ENCODE measurements at regions of chr2 and their contacts with region 1.

Region 1: DNA sequence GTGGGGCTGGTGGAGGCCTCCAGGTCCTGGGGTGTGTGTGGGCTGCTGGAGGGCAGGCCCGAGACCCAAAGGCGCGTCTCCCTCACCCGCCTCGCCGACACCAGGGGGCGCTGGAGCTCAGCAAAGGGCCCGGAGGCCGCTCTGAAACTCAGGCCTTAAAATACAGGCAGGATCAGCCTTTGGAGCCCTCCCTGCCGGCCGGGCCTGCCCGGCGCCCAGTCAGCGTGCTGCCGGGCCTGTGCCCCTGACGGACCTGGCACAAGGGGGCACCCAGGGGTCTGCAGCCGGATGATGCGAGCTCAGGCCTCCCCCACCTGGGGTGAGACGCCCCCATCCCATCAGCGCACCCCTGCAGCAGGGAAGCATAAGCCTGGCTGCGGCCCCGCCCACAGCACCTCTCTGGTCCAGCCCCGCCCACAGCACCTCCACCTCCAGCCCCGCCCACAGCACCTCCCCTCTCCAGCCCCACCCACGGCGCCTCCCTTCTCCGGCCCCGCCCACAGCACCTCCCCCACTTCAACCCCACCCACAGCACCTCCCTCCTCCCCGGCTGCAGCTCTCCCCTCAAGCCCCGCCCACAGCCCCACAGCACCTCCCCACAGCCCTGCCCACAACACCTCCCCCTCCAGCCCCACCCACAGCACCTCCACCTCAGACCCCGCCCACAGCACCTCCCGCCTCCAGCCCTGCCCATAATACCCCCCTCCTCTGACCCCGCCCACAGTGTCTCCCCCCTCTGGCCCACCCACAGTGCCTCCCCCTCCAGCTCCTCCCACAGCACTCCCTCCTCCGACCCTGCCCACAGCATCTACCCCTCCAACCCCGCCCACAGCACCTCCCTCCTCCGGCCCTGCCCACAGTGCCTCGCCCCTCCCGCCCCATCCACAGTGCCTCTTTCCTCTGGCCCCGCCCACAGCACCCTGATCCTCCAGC is 92.8 kb upstream of the OTOS start:
- DNase-seq: peak; percentile 86 to 94 (median 92)
- ATAC-seq: peak; percentile 77 to 83 (median 78)
- H3K4me3 ChIP-seq: peak overlapping the region in 9 of 12 donors; percentile 24 to 46 (median 35)
- H3K27ac ChIP-seq: peak overlapping the region in 9 of 12 donors; percentile 14 to 91 (median 66)
- H3K4me1 ChIP-seq: peaks cover 0 to 54% (median 22%) of the 10 kb centered on the region in 12 donors
- H3K27me3 ChIP-seq: no peaks in the 10 kb centered on the region
- CTCF ChIP-seq: peak; percentile 76 to 91 (median 86)
- POLR2A ChIP-seq: no peak

Region 2: GRCh38 chr2:240189686-240190085 is 43.5 kb before region 1 on chr2:
- intact Hi-C with region 1: no loop called
- DNase-seq: peak in 1 of 5 donors; percentile 56
- ATAC-seq: peak in 1 of 4 donors; percentile 31
- H3K4me3 ChIP-seq: no peak overlapping the region
- H3K27ac ChIP-seq: no peak overlapping the region
- H3K4me1 ChIP-seq: no peaks in the 10 kb centered on the region
- H3K27me3 ChIP-seq: peaks cover 0 to 8% (median 0%) of the 10 kb centered on the region in 9 donors
- CTCF ChIP-seq: no peak
- POLR2A ChIP-seq: no peak

Region 3: DNA sequence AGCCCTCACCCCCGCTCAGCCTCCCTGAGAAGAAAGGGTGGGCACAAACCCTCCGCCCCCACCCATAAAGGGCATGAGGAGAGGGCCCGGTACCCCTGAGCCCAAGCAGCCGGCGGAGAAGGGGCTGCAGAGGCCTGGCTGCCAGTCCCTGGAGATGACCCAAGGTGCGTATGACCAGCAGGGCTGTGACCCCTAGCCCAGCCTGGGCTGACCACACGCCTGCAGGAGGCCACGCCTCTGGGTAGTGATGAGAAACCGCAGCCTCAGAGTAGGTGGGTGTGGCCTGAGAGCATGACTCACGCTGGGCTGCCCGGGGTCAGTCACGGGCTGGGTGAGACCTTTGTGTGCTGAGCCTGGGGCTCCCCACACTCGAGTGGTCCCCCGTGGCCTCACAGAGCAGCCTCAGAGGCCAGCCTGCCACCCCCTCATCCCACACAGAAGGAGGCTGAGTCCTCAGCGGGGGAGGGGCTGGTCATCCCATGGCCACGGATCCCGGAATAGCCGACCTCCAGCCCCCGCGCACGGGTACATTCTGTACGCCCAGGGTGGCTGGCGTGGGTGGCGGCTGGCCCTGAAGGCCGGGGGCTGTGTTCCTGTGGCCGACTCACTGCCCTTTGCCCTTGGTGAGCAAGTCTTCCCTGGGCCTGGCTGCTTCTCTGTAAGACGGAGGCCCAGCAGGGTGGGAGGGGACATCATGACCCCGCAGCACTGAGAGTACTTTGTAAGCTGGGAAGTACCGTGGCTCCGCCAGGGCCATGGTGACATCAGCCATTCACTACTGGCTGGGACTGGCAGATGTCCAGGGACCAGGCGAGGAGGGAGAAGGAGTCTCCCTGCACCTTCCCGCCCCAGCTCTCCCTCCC is 18.0 kb after region 1 on chr2:
- intact Hi-C with region 1: loop called in 2 of 10 experiments (anchors 1 kb)
- DNase-seq: peak; percentile 88 to 97 (median 92)
- ATAC-seq: peak; percentile 88 to 91 (median 90)
- H3K4me3 ChIP-seq: peak overlapping the region in 8 of 12 donors; percentile 11 to 42 (median 22)
- H3K27ac ChIP-seq: peak overlapping the region; percentile 72 to 97 (median 87)
- H3K4me1 ChIP-seq: peaks cover 6 to 52% (median 24%) of the 10 kb centered on the region in 12 donors
- H3K27me3 ChIP-seq: no peaks in the 10 kb centered on the region
- CTCF ChIP-seq: no peak
- POLR2A ChIP-seq: no peak

Region 4: DNA sequence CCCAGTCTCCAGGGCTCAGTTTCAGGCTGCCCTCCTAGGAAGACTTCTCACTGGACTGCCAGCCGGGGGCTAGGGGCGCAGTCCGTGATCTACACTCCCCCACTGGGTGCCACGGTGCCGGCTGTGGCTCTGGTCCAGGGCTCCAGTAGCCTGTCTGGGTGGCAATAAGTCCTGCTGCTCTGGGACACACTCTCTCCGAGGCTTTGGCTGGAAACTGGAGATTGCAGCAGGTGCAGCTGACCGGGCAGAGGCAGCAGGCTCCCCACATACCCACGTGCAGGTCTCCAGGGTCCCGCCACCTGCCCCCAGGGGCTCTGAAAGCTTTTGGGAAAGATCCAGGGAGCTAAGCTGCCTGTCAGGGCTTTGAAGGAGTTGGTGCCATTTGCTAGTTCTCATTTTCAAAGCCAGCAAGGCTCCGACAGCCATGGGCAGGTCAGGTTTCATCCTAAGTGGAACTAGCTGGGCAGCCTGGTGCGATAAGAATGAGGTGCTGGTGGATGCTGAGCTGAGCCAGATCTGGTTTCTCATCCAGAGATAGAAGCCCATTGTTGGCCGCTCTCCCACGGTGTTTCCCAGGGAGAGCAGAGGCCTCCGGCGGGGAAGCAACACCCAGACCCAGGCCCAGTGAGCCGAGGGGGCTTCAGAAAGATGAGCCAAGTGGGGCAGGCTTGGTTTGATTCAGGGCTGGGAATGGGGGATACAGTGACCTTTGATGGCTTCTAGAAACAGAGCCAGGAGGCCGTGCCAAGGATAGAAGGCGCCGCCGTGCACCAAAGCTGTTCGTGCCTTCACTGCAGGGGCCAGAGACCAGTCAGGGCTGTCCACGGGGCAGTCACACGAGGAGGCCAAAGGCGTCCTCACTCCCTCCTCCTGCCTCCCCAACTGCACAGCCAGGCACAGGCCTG is 60.6 kb after region 1 on chr2:
- intact Hi-C with region 1: loop called in 6 of 10 experiments (anchors 1 to 10 kb)
- DNase-seq: peak; percentile 44 to 83 (median 65)
- ATAC-seq: peak in 3 of 4 donors; percentile 53 to 73 (median 71)
- H3K4me3 ChIP-seq: no peak overlapping the region
- H3K27ac ChIP-seq: peak overlapping the region in 11 of 12 donors; percentile 25 to 83 (median 79)
- H3K4me1 ChIP-seq: peaks cover 0 to 54% (median 14%) of the 10 kb centered on the region in 12 donors
- H3K27me3 ChIP-seq: no peaks in the 10 kb centered on the region
- CTCF ChIP-seq: no peak
- POLR2A ChIP-seq: no peak

Region 5: GRCh38 chr2:240343176-240343947 is 110.1 kb after region 1 on chr2:
- intact Hi-C with region 1: loop called in 1 of 10 experiments (anchors 2 kb)
- DNase-seq: no peak
- ATAC-seq: no peak
- H3K4me3 ChIP-seq: no peak overlapping the region
- H3K27ac ChIP-seq: no peak overlapping the region
- H3K4me1 ChIP-seq: peaks cover 0 to 3% (median 0%) of the 10 kb centered on the region in 12 donors
- H3K27me3 ChIP-seq: peaks cover 0 to under 1% (median 0%) of the 10 kb centered on the region in 9 donors
- CTCF ChIP-seq: peak in 1 of 12 donors; percentile 10
- POLR2A ChIP-seq: no peak

Region 6: DNA sequence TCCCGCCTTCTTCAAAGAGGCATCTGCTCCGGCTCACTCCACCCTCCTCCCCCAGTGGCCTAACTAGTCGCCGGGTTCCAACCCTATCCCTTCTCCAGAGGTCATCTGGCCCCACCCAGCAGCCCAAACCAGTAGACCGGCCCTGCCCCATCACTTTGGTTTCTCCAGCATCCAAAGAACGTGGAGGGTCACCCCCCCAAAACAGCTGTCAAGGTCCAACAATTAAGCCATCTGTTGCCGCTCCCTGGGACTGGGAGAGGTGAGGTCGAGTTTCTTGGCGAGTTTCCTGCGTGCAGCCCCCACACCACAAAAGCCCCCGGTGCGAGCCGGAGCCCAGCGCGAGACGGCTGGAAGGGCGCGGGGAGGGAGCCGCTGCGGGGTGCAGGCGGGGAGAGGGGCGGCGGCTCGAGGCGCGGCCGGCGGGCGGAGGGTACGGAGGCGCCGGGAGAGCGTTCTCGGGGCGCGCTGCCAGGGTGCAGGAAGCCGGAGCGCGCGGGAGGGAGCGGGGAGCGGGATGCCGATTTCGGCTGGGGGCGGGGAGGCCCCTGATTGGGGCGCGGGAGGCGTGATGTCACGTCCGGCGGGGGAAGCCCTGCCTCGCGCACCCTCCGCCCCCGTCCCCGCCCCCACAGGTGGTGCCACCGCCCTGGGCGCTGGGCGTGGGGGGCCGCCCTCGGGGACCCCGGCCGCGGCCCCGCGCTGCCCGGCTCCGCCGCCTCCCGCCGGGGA is 201.7 kb after region 1 on chr2:
- intact Hi-C with region 1: loop called (anchors 1 to 2 kb)
- DNase-seq: peak; percentile 93 to 96 (median 95)
- ATAC-seq: peak; percentile 68 to 84 (median 82)
- H3K4me3 ChIP-seq: peak overlapping the region; percentile 6 to 87 (median 64)
- H3K27ac ChIP-seq: peak overlapping the region; percentile 70 to 97 (median 90)
- H3K4me1 ChIP-seq: peaks cover 0 to 47% (median 25%) of the 10 kb centered on the region in 12 donors
- H3K27me3 ChIP-seq: peaks cover 0 to 32% (median 4%) of the 10 kb centered on the region in 9 donors
- CTCF ChIP-seq: no peak
- POLR2A ChIP-seq: no peak

Region 7: GRCh38 chr2:240586198-240586918 is 353.1 kb after region 1 on chr2 and contains the start of gene CAPN10:
- intact Hi-C with region 1: loop called in 1 of 10 experiments (anchors 10 kb)
- DNase-seq: peak; percentile 99
- ATAC-seq: peak; percentile 94 to 97 (median 96)
- H3K4me3 ChIP-seq: peak within 1 kb of the TSS; percentile 55 to 97 (median 83)
- H3K27ac ChIP-seq: peak within 1 kb of the TSS; percentile 83 to 98 (median 92)
- H3K4me1 ChIP-seq: peaks cover 7 to 65% (median 34%) of the 10 kb centered on the region in 12 donors
- H3K27me3 ChIP-seq: no peaks in the 10 kb centered on the region
- CTCF ChIP-seq: no peak
- POLR2A ChIP-seq: peak in 1 of 2 donors; percentile 57
- total RNA-seq, gene CAPN10: 14.9 to 35.6 (median 21.9) TPM

Region 8: DNA sequence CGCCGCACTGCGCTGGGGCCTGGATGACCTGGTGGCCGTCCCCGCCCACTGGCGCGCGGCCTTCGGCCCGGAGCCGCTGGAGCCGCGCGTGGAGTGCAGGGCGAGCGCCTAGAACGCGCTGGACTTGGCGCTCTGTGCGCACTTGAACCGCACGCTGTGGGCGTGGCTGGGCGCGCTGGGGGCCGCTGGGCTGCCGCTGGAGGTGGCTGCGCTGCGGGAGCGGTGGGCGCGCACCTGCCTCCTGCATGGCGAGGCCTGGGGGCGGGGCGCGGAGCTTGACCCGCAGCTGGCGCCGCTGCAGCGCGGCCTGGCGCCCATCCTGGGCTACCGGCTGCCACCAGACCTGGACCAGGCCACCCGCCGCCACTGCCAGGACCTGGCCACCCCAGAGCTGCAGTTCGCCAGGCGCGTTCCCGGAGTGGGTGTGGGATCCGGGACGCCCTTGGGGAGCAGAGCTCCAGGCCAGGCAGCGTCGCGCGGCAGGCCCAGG is 439.5 kb after region 1 on chr2:
- intact Hi-C with region 1: no loop called
- DNase-seq: peak in 1 of 5 donors; percentile 39
- ATAC-seq: peak in 1 of 4 donors; percentile 28
- H3K4me3 ChIP-seq: peak overlapping the region in 2 of 12 donors; percentile 22 to 39
- H3K27ac ChIP-seq: no peak overlapping the region
- H3K4me1 ChIP-seq: peaks cover 0 to 9% (median 0%) of the 10 kb centered on the region in 12 donors
- H3K27me3 ChIP-seq: peaks cover 0 to 24% (median 9%) of the 10 kb centered on the region in 9 donors
- CTCF ChIP-seq: no peak
- POLR2A ChIP-seq: no peak